ENCODE measurements at regions of chr9 and their contacts with region 1.

Region 1: DNA sequence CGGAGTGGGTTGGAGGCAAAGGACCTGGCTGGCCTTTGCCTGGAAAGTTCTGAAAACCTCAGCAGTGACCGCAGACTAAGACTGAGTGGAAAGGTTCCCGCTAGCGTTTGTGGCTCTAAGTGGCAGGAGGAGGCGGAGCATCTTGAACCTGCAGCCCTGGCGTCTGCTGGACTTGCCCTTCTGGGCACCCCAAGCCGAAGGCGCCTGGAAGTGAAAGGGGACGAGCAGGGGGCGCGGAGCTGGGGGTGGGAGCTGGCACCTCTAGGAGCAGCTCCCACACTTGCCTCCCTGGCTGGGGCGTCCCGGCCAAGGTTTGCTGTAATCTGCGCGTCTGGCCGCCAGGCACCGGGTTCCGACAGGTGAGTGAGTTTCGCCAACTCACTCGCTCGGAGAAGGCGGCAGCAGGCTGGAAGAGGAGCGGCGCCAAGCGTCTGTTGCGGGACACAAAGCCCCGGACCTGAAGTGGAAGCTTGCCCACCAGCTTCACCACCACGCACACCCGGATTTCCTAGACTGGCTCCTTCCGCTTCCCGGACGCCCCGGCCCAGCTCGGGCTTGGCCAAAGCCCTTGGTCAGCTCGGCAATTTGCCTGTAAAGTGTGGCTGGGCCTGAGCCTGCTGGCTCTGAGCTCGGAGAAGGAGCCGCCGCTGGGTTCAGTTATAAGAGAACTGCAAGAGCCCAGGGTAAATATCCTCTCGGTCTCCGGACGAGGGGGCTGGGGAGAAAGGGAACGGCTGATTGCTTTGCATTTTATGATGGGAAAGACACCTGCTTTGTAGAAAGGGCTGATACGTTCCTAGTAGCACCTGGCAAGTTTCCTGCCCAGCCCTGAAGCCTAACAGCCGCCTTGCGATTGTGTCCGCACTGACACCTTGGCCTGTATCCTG is at the start of gene GNA14:
- DNase-seq: no peak
- ATAC-seq: peak; percentile 71
- H3K4me3 ChIP-seq: peak within 1 kb of the TSS; percentile 29 to 54
- H3K27ac ChIP-seq: no peak within 1 kb of the TSS
- H3K4me1 ChIP-seq: no peaks in the 10 kb centered on the region
- H3K27me3 ChIP-seq: no peaks in the 10 kb centered on the region
- CTCF ChIP-seq: no peak
- total RNA-seq, gene GNA14: 0.15 TPM

Region 2: GRCh38 chr9:77705636-77706035 is 57.2 kb after region 1 on chr9:
- CTCF ChIA-PET with region 1: interaction called, 11 read pairs
- POLR2A ChIA-PET with region 1: no interaction called
- in situ Hi-C with region 1: no loop called
- intact Hi-C with region 1: no loop called
- DNase-seq: no peak
- ATAC-seq: no peak
- H3K4me3 ChIP-seq: no peak overlapping the region
- H3K27ac ChIP-seq: no peak overlapping the region
- H3K4me1 ChIP-seq: no peaks in the 10 kb centered on the region
- H3K27me3 ChIP-seq: no peaks in the 10 kb centered on the region
- CTCF ChIP-seq: no peak